ENCODE measurements at regions of chr13 and their contacts with region 1.

Region 1: DNA sequence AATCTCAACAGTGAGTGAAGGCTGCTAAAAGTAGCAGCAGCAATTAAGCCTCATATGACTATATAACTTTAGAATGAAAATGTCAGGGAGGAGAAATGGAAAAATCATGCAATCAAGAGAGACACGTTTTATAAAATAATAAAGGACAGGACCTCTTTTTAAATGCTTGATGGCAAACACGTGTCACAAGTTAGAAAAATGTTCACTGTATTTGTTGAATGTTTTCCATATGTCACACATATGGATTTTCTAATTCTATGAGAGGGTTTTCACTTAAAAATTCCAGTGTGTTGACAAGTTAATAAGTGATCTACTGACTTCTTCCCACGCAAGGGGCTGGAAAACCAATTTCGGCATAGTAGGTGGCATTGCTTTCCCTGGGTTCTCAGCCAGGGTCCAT is 27.7 kb upstream of the KCTD12 start:
- DNase-seq: no peak
- H3K4me3 ChIP-seq: no peak overlapping the region
- H3K27ac ChIP-seq: no peak overlapping the region
- H3K4me1 ChIP-seq: no peaks in the 10 kb centered on the region
- H3K27me3 ChIP-seq: no peaks in the 10 kb centered on the region
- CTCF ChIP-seq: no peak
- POLR2A ChIP-seq: no peak

Region 2: DNA sequence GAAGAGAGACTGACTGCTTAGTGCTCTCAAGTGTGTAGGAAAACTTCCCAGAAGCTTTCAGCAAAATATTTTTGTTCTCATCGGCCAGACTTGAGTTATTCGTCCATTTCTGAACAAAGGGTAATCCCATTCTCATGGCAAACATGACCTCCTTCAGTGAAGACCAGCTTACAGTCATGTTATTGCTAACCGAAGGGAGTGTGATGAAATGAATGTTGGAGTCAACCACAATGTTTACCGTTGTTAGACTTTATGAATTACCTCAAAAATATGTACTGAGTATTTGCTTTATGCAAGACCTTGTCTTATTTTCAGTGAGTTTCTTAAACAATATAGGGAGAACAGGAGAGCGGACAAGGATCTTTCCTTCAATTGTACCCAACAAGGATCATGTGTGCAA is 1049.2 kb before region 1 on chr13:
- intact Hi-C with region 1: loop called in 1 of 2 experiments (anchors 5 kb)
- DNase-seq: no peak
- H3K4me3 ChIP-seq: no peak overlapping the region
- H3K27ac ChIP-seq: no peak overlapping the region
- H3K4me1 ChIP-seq: no peaks in the 10 kb centered on the region
- H3K27me3 ChIP-seq: no peaks in the 10 kb centered on the region
- CTCF ChIP-seq: no peak
- POLR2A ChIP-seq: no peak

Measured in adrenal gland (tissue), 19 donors.